Dorsolateral prefrontal cortex (tissue), 120 donors: ENCODE measurements at regions of chr5 and their contacts with region 1.

Region 1: DNA sequence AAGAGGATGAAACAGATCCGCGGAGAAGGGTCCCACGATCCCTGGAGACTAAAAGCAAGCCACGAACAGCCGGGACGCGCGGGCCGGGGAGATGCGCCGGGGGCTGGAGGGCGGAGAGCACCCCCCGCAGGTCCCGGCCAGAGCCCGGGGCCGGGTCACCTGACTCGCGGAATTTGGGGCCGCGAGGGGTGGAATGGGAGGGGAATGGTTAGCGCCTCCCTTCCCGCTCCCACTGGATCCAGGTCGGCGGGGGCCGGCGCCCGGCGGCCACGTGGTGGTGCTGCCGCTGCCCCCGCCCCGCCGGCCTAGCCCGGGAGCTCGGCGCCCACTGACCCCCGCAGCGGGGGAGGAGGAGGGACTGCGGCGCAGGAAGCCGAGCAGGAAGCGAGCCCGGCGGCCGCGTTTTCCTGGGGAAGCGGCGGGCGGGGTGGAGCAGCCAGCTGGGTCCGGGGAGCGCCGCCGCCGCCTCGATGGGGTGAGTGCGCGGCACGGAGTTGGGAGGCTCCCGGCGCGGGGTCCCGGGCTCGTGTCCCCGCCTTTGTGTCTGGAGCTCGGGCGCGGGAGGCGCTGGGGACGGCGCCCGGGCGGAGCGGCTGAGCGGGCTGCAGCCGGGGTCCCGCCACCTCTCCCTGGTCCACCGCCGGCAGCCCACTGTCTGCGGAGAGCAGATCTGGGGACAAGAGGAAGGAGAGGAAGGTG is at the start of gene RAI14:
- DNase-seq: peak; percentile 37 to 82 (median 59)
- H3K4me3 ChIP-seq: peak within 1 kb of the TSS; percentile 54 to 98 (median 89)
- H3K27ac ChIP-seq: peak within 1 kb of the TSS; percentile 1 to 92 (median 84)
- H3K27me3 ChIP-seq: no peaks in the 10 kb centered on the region
- CTCF ChIP-seq: peak in 25 of 56 donors; percentile 5 to 52 (median 25)
- total RNA-seq, gene RAI14: 5.6 to 30.9 (median 12.5) TPM

Region 2: DNA sequence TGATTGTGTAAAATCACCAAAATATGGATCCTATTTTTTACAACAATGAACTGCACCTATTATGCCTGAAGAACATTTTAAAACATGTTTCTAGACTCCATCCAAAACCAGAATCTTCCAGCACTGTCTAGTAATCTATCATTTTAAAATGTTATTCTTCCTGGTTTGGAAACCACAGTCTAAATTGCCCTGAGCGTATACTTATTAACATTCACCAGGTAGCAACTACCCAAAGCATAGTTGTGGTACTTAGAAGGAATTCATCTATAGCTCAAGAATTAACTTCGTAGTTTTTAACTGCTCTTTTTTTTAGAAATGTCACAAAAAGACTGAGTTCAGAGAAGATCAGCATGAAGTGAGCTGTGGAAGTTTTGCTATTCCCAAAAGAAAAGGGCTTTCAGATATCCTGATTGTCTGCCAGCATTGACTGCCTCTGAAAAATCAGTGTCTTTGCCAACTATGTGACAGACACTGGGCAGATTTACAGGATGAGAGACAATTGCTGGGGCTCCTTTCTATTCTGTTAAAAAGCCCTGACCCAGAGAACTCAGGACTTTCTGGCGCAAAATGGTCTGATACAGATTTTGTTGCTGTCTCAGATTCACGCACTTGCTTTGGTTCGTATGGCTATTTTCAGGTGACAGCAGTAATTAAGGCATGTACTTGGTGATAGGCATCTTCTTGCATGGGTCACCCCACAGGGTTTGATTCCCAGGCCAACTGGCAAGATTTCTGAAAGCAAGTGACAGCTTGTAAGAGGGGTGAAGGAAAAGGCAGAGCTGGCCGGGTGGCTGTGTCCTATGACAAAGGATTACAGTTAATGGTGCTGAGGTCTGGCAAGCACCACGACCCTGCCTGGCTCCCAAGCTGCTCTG is 152.5 kb before region 1 on chr5:
- intact Hi-C with region 1: loop called in 1 of 2 experiments (anchors 5 kb)
- DNase-seq: peak in 7 of 10 donors; percentile 21 to 81 (median 48)
- H3K4me3 ChIP-seq: peak overlapping the region in 47 of 59 donors; percentile 1 to 57 (median 29)
- H3K27ac ChIP-seq: peak overlapping the region; percentile 43 to 96 (median 87)
- H3K27me3 ChIP-seq: no peaks in the 10 kb centered on the region
- CTCF ChIP-seq: peak in 10 of 56 donors; percentile 7 to 45 (median 18)

Region 3: DNA sequence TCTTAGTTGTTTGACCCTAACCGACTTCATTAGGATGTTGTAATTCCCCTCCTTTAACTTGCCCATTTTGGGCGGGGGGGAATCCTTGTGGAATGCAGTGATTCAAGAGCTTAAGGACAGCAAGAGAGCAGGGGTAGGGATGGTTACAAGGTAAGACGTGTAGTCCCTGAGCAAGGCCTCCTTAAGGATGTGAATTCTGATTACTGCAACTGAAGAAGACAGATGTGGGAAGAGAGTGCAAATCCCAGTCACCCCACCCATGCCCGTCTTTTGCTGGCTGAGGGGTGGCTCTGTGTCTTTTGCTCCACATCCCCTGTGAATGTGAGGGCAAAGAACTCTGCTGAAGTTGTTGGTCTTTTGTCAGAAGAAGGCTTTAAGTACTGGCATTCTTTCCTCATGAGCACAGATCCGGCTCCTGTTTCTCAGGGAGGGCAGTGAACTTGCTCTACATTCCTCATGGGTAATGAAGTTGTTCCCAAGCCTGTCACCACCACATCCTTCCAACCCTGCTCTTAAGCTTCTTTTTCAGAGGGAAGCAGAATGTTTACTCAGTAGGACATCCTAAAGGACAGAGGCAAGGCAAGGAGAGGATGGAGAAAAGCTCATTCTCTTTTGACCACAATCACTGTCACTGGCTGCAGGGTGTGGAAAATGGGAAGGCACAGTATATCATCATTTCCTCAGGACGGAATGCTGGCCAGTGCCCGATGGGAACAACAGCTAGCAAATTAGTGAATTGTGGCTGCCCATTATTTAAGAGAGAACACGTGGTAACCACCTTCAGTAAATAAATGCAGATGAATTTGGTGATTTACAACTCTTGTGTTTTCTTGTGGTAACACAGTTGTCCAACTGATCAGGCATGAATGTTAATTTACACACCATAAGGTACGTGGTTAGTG is 61.5 kb after region 1 on chr5:
- intact Hi-C with region 1: no loop called
- DNase-seq: no peak
- H3K4me3 ChIP-seq: no peak overlapping the region
- H3K27ac ChIP-seq: no peak overlapping the region
- H3K27me3 ChIP-seq: no peaks in the 10 kb centered on the region
- CTCF ChIP-seq: no peak

Region 4: GRCh38 chr5:34866989-34867471 is 210.9 kb after region 1 on chr5:
- intact Hi-C with region 1: loop called in 1 of 2 experiments (anchors 10 kb)
- DNase-seq: peak in 2 of 10 donors; percentile 18 to 47
- H3K4me3 ChIP-seq: peak overlapping the region in 26 of 59 donors; percentile 9 to 62 (median 38)
- H3K27ac ChIP-seq: peak overlapping the region in 36 of 59 donors; percentile 16 to 96 (median 86)
- H3K27me3 ChIP-seq: no peaks in the 10 kb centered on the region
- CTCF ChIP-seq: no peak

Region 5: GRCh38 chr5:35171078-35171477 is 514.9 kb after region 1 on chr5:
- intact Hi-C with region 1: no loop called
- DNase-seq: no peak
- H3K4me3 ChIP-seq: no peak overlapping the region
- H3K27ac ChIP-seq: no peak overlapping the region
- H3K27me3 ChIP-seq: no peaks in the 10 kb centered on the region
- CTCF ChIP-seq: no peak